ENCODE measurements at regions of chr2 and their contacts with region 1.

Region 1: GRCh38 chr2:171999604-172000469 is at the start of gene METAP1D:
- DNase-seq: peak; percentile 90
- ATAC-seq: peak; percentile 94
- H3K4me3 ChIP-seq: peak within 1 kb of the TSS; percentile 55 to 93 (median 83)
- H3K4me3 Mint-ChIP-seq: peak within 1 kb of the TSS; percentile 98
- H3K27ac ChIP-seq: peak within 1 kb of the TSS; percentile 12 to 73
- H3K27ac Mint-ChIP-seq: peak within 1 kb of the TSS; percentile 93
- H3K4me1 ChIP-seq: peaks cover 13 to 14% of the 10 kb centered on the region in 2 donors
- H3K4me1 Mint-ChIP-seq: peaks cover 18% of the 10 kb centered on the region
- H3K27me3 ChIP-seq: peaks cover 0 to 3% (median 0%) of the 10 kb centered on the region in 4 experiments
- H3K27me3 Mint-ChIP-seq: peaks cover 6% of the 10 kb centered on the region
- CTCF ChIP-seq: no peak
- total RNA-seq, gene METAP1D: 8.2 and 8.9 TPM in 2 replicates

Region 2: GRCh38 chr2:171893824-171894611 is 105.8 kb before region 1 on chr2 and contains the start of gene SLC25A12:
- CTCF ChIA-PET with region 1: no interaction called
- POLR2A ChIA-PET with region 1: no interaction called
- intact Hi-C with region 1: loop called (anchors 1 kb)
- DNase-seq: peak; percentile 87
- ATAC-seq: peak; percentile 92
- H3K4me3 ChIP-seq: peak within 1 kb of the TSS; percentile 78 to 93 (median 88)
- H3K4me3 Mint-ChIP-seq: peak within 1 kb of the TSS; percentile 99
- H3K27ac ChIP-seq: peak within 1 kb of the TSS; percentile 69 to 88
- H3K27ac Mint-ChIP-seq: peak within 1 kb of the TSS; percentile 91
- H3K4me1 ChIP-seq: peaks cover 14 to 16% of the 10 kb centered on the region in 2 donors
- H3K4me1 Mint-ChIP-seq: peaks cover 25% of the 10 kb centered on the region
- H3K27me3 ChIP-seq: no peaks in the 10 kb centered on the region
- H3K27me3 Mint-ChIP-seq: no peaks in the 10 kb centered on the region
- CTCF ChIP-seq: no peak
- total RNA-seq, gene SLC25A12: 19.6 and 21.0 TPM in 2 replicates

Region 3: DNA sequence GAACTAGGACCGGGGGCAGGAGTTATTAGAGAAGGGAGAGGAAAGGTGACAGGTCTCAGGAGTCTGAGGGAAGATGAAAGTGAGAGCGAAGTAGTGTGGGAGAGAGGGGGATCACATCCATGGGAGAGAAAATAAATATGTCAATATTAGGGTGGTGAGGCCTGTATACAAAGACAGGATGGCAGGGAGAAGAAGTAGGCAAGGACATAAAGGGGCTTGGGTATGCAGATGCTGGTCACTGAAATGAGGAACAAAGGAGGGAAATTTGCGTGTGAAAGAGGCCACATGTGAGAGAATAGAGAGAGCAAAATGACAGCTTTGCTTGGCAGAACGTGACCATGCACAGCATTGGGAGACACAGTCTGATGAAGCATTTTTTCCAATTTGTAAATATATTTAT is 13.6 kb after region 1 on chr2:
- CTCF ChIA-PET with region 1: no interaction called
- POLR2A ChIA-PET with region 1: no interaction called
- intact Hi-C with region 1: no loop called
- DNase-seq: no peak
- ATAC-seq: peak; percentile 36
- H3K4me3 ChIP-seq: no peak overlapping the region
- H3K4me3 Mint-ChIP-seq: no peak overlapping the region
- H3K27ac ChIP-seq: no peak overlapping the region
- H3K27ac Mint-ChIP-seq: no peak overlapping the region
- H3K4me1 ChIP-seq: no peaks in the 10 kb centered on the region
- H3K4me1 Mint-ChIP-seq: peaks cover 7% of the 10 kb centered on the region
- H3K27me3 ChIP-seq: no peaks in the 10 kb centered on the region
- H3K27me3 Mint-ChIP-seq: no peaks in the 10 kb centered on the region
- CTCF ChIP-seq: no peak